HCT116 (cell line): ENCODE measurements at regions of chr19 and their contacts with region 1.

Region 1: GRCh38 chr19:2524838-2525723 is 49.2 kb downstream of the GADD45B start:
- DNase-seq: peak; percentile 87
- ATAC-seq: peak; percentile 82
- H3K4me3 ChIP-seq: peak overlapping the region; percentile 31 to 56
- H3K27ac ChIP-seq: peak overlapping the region; percentile 87
- H3K4me1 ChIP-seq: peaks cover 61 to 79% of the 10 kb centered on the region in 2 experiments
- H3K27me3 ChIP-seq: no peaks in the 10 kb centered on the region
- CTCF ChIP-seq: no peak
- POLR2A ChIP-seq: peak; percentile 53
- RAD21 ChIP-seq: peak; percentile 40

Region 2: GRCh38 chr19:2394442-2395292 is 130.4 kb before region 1 on chr19:
- CTCF ChIA-PET with region 1: no interaction called
- POLR2A ChIA-PET with region 1: no interaction called
- RAD21 ChIA-PET with region 1: no interaction called
- intact Hi-C with region 1: no loop called
- DNase-seq: no peak
- ATAC-seq: no peak
- H3K4me3 ChIP-seq: no peak overlapping the region
- H3K27ac ChIP-seq: no peak overlapping the region
- H3K4me1 ChIP-seq: peaks cover 0 to 8% of the 10 kb centered on the region in 2 experiments; a peak in 1 of 4 replicates
- H3K27me3 ChIP-seq: no peaks in the 10 kb centered on the region
- CTCF ChIP-seq: no peak
- POLR2A ChIP-seq: no peak
- RAD21 ChIP-seq: no peak

Region 3: GRCh38 chr19:2507109-2507508 is 18.0 kb before region 1 on chr19:
- CTCF ChIA-PET with region 1: interaction called, 3 read pairs
- POLR2A ChIA-PET with region 1: interaction called, 22 read pairs
- RAD21 ChIA-PET with region 1: no interaction called
- intact Hi-C with region 1: no loop called
- DNase-seq: peak; percentile 75
- ATAC-seq: peak; percentile 29
- H3K4me3 ChIP-seq: peak overlapping the region; percentile 10 to 48; a peak in 3 of 4 replicates
- H3K27ac ChIP-seq: peak overlapping the region; percentile 55
- H3K4me1 ChIP-seq: peaks cover 42 to 64% of the 10 kb centered on the region in 2 experiments
- H3K27me3 ChIP-seq: no peaks in the 10 kb centered on the region
- CTCF ChIP-seq: no peak
- POLR2A ChIP-seq: no peak
- RAD21 ChIP-seq: no peak

Region 4: GRCh38 chr19:2543463-2544442 is 18.7 kb after region 1 on chr19:
- CTCF ChIA-PET with region 1: interaction called, 5 read pairs
- POLR2A ChIA-PET with region 1: interaction called, 35 read pairs
- RAD21 ChIA-PET with region 1: no interaction called
- intact Hi-C with region 1: no loop called
- DNase-seq: peak; percentile 91
- ATAC-seq: peak; percentile 82
- H3K4me3 ChIP-seq: peak overlapping the region; percentile 16 to 20; a peak in 2 of 4 replicates
- H3K27ac ChIP-seq: peak overlapping the region; percentile 80
- H3K4me1 ChIP-seq: peaks cover 51 to 77% of the 10 kb centered on the region in 2 experiments
- H3K27me3 ChIP-seq: no peaks in the 10 kb centered on the region
- CTCF ChIP-seq: peak in 1 of 3 experiments; percentile 25; a peak in 2 of 6 replicates
- POLR2A ChIP-seq: no peak
- RAD21 ChIP-seq: peak; percentile 63

Region 5: DNA sequence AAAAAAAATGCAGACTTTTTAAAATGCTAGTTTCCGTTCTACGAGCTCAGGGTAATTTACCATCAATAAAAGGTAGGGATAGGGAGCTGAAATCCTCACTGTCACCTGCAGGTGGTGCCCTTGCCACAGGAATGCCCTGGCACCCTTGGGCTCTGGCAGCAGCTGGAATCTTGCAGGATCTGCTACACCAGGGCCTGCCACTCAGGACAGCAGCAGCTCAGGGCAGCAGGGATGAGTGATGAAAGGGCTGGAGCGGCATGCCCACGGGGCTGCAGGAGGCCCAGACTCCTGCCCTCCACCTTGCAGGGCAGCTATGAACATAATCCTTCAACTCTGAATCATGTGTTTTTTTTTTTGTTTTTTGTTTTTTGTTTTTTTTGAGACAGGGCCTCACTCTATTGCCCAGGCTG is 123.5 kb after region 1 on chr19:
- CTCF ChIA-PET with region 1: no interaction called
- POLR2A ChIA-PET with region 1: no interaction called
- RAD21 ChIA-PET with region 1: no interaction called
- intact Hi-C with region 1: no loop called
- DNase-seq: peak; percentile 51
- ATAC-seq: peak; percentile 98
- H3K4me3 ChIP-seq: no peak overlapping the region
- H3K27ac ChIP-seq: no peak overlapping the region
- H3K4me1 ChIP-seq: peaks cover 0 to under 1% of the 10 kb centered on the region in 2 experiments; a peak in 1 of 4 replicates
- H3K27me3 ChIP-seq: no peaks in the 10 kb centered on the region
- CTCF ChIP-seq: peak; percentile 76 to 96 (median 95)
- POLR2A ChIP-seq: no peak
- RAD21 ChIP-seq: peak; percentile 99